Right lobe of liver (tissue), 6 donors: ENCODE measurements at regions of chr20 and their contacts with region 1.

Region 1: DNA sequence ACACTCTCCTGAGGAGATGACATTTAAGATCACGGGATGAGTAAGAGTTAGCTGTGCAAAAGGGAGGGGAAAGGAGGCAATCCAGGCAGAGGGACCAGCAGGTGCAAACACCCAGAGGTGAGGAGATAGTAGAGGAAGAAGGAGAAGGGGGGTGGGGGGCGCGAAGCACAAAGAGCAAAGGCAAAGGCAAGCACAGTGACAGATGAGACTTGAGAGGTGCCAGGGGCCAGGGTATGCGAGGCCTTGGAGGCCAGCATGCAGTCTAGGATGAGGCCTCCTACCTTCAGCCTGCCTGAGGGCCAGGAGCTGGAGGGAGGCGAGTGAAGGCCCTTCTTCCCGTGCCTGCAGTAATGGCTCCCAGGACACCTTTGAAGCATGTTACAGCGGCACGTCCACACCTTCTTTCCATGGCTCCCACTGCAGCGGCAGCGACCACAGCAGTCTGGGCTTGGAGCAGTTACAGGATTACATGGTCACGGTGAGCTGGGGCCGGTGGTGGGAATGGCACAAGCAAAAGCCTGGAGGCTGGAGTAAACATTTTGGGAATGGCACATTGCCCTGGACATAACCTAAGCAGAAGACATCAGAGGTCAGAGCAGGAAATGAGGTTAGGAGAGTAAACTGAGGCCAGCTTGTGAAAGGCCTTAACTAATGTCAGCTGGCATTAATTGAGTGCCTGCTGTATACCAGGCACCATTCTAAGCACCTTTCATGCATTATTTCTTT is 18.6 kb downstream of the CCM2L start:
- DNase-seq: no peak
- ATAC-seq: no peak
- H3K4me3 ChIP-seq: no peak overlapping the region
- H3K27ac ChIP-seq: no peak overlapping the region
- H3K4me1 ChIP-seq: peaks cover 0 to 9% (median 0%) of the 10 kb centered on the region in 4 donors
- H3K27me3 ChIP-seq: no peaks in the 10 kb centered on the region
- CTCF ChIP-seq: no peak
- POLR2A ChIP-seq: no peak

Region 2: GRCh38 chr20:31822421-31823330 is 206.1 kb before region 1 on chr20:
- intact Hi-C with region 1: loop called in 1 of 2 experiments (anchors 5 kb)
- DNase-seq: peak; percentile 76 to 78 (median 77)
- ATAC-seq: peak; percentile 76 to 92 (median 89)
- H3K4me3 ChIP-seq: no peak overlapping the region
- H3K27ac ChIP-seq: no peak overlapping the region
- H3K4me1 ChIP-seq: peaks cover 0 to 3% (median 0%) of the 10 kb centered on the region in 4 donors
- H3K27me3 ChIP-seq: no peaks in the 10 kb centered on the region
- CTCF ChIP-seq: peak; percentile 95 to 99 (median 98)
- POLR2A ChIP-seq: no peak

Region 3: DNA sequence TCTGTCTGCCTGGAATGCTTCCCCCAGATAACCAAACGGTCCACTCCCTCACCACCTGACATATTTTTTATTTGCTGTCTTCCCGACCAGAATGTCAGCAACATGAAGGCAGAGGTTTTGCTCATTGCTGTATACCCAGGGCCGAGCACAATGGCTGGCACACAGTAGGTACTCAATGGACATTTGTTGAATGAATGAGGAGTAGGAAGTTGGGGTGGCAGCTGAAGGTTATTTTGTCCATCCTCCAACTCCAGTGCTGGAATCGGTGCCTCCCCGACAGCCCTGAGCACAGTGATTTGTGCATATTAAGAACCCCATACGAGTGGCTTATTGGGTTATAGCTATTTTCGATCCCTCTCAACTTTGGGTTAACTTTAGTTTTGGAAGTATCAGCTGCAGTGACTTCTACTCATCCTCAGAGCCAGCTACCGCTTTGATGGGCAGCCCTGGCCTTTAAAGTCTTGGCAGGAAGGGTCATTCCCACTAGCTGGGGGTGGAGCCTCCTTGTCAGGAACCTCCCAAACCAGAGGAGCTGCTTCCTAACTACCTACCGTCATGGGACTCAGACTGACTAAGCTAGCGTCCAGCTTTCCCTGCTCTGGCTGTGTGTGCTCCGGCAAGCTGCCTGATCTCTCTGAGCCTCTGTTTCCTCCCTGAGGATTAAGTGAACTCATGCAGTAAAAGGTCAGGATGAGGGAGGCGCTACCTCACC is 168.7 kb before region 1 on chr20:
- intact Hi-C with region 1: loop called in 1 of 2 experiments (anchors 10 kb)
- DNase-seq: peak in 1 of 3 donors; percentile 5
- ATAC-seq: peak in 3 of 4 donors; percentile 21 to 35 (median 33)
- H3K4me3 ChIP-seq: no peak overlapping the region
- H3K27ac ChIP-seq: no peak overlapping the region
- H3K4me1 ChIP-seq: peaks cover 0 to 10% (median 0%) of the 10 kb centered on the region in 4 donors
- H3K27me3 ChIP-seq: peaks cover 0 to 9% of the 10 kb centered on the region in 2 donors
- CTCF ChIP-seq: no peak
- POLR2A ChIP-seq: no peak

Region 4: GRCh38 chr20:31987744-31988143 is 41.1 kb before region 1 on chr20:
- intact Hi-C with region 1: no loop called
- DNase-seq: no peak
- ATAC-seq: peak; percentile 50 to 87 (median 72)
- H3K4me3 ChIP-seq: no peak overlapping the region
- H3K27ac ChIP-seq: no peak overlapping the region
- H3K4me1 ChIP-seq: no peaks in the 10 kb centered on the region
- H3K27me3 ChIP-seq: no peaks in the 10 kb centered on the region
- CTCF ChIP-seq: no peak
- POLR2A ChIP-seq: no peak

Region 5: GRCh38 chr20:32109392-32110172 is 80.8 kb after region 1 on chr20 and contains the start of gene TM9SF4:
- intact Hi-C with region 1: no loop called
- DNase-seq: peak; percentile 89 to 91 (median 90)
- ATAC-seq: peak; percentile 87 to 94 (median 93)
- H3K4me3 ChIP-seq: peak within 1 kb of the TSS; percentile 76 to 99 (median 93)
- H3K27ac ChIP-seq: peak within 1 kb of the TSS; percentile 96 to 99 (median 98)
- H3K4me1 ChIP-seq: peaks cover 0 to 31% (median 9%) of the 10 kb centered on the region in 4 donors
- H3K27me3 ChIP-seq: no peaks in the 10 kb centered on the region
- CTCF ChIP-seq: no peak
- POLR2A ChIP-seq: peak; percentile 66
- total RNA-seq, gene TM9SF4: 26.9 to 33.9 (median 30.5) TPM